Naive thymus-derived CD4-positive, alpha-beta T cell (primary cell): ENCODE measurements at regions of chr1 and their contacts with region 1.

Region 1: GRCh38 chr1:45583264-45583665 is 576 bp upstream of the NASP start:
- DNase-seq: peak; percentile 77 to 97 (median 95)
- ATAC-seq: peak; percentile 86
- H3K4me3 ChIP-seq: peak overlapping the region; percentile 98
- H3K4me3 Mint-ChIP-seq: peak overlapping the region; percentile 89 to 100 (median 99)
- H3K27ac ChIP-seq: peak overlapping the region; percentile 91
- H3K27ac Mint-ChIP-seq: peak overlapping the region; percentile 91 to 99 (median 98)
- H3K4me1 ChIP-seq: peaks cover 16 to 18% of the 10 kb centered on the region in 2 donors
- H3K4me1 Mint-ChIP-seq: peaks cover 20 to 37% (median 26%) of the 10 kb centered on the region in 7 donors
- H3K27me3 ChIP-seq: no peaks in the 10 kb centered on the region
- H3K27me3 Mint-ChIP-seq: no peaks in the 10 kb centered on the region

Region 2: GRCh38 chr1:44631647-44632539 is 951.4 kb before region 1 on chr1:
- CTCF ChIA-PET with region 1: no interaction called
- POLR2A ChIA-PET with region 1: no interaction called
- intact Hi-C with region 1: loop called in 1 of 2 experiments (anchors 5 kb)
- DNase-seq: peak; percentile 80 to 92 (median 87)
- ATAC-seq: peak; percentile 87
- H3K4me3 ChIP-seq: peak overlapping the region; percentile 70
- H3K4me3 Mint-ChIP-seq: peak overlapping the region; percentile 69 to 95 (median 90)
- H3K27ac ChIP-seq: peak overlapping the region; percentile 85
- H3K27ac Mint-ChIP-seq: peak overlapping the region; percentile 46 to 99 (median 97)
- H3K4me1 ChIP-seq: peaks cover 8 to 13% of the 10 kb centered on the region in 2 donors
- H3K4me1 Mint-ChIP-seq: peaks cover 26 to 50% (median 39%) of the 10 kb centered on the region in 7 donors
- H3K27me3 ChIP-seq: no peaks in the 10 kb centered on the region
- H3K27me3 Mint-ChIP-seq: no peaks in the 10 kb centered on the region

Region 3: DNA sequence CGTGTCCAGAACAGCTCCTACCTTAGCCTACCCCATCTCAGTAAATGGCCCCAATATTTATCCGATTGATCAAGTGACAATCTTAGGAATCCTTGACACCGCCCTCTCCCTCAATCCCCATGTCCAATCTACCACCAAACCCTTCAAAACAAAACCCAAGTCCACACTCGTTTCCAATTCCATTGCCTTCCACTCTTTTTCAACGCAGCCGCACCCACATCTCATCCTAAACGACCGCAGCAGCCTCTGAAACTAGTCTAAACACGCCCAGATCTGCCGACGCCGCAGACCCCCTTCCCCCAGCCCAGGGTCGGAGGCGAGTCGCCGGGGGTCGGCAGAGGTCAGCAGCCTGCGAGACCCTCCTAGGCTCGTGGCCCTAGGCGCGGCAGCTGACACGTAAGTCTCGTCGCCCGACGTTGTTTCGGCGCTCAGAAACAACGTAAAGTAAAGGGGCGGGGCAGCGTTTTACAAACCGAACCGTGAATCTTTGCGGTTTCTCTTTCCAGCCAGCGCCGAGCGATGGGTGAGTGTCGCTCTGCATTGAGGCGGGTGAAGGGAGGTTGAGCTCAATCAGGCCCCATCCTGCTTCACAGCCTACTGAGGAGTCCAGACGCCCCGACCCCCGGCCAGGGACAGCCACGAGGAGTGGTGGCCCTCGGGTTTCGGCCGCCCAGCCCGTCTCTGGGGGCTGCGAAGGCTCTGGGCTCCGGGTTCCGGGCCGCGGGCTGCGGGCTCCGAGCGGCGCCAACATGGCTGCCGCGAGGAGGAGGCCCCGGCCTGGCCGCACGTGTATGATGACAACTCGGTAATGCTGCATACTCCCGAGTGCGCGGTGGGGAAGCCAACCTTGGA is 808.0 kb before region 1 on chr1 and contains the start of gene RPS8:
- CTCF ChIA-PET with region 1: no interaction called
- POLR2A ChIA-PET with region 1: no interaction called
- intact Hi-C with region 1: loop called in 1 of 2 experiments (anchors 1 kb)
- DNase-seq: peak; percentile 77 to 92 (median 90)
- ATAC-seq: peak; percentile 91
- H3K4me3 ChIP-seq: peak within 1 kb of the TSS; percentile 99
- H3K4me3 Mint-ChIP-seq: peak within 1 kb of the TSS; percentile 88 to 99 (median 92)
- H3K27ac ChIP-seq: peak within 1 kb of the TSS; percentile 89
- H3K27ac Mint-ChIP-seq: peak within 1 kb of the TSS; percentile 91 to 98 (median 94)
- H3K4me1 ChIP-seq: peaks cover 6 to 19% of the 10 kb centered on the region in 2 donors
- H3K4me1 Mint-ChIP-seq: peaks cover 20 to 45% (median 38%) of the 10 kb centered on the region in 7 donors
- H3K27me3 ChIP-seq: no peaks in the 10 kb centered on the region
- H3K27me3 Mint-ChIP-seq: no peaks in the 10 kb centered on the region
- total RNA-seq, gene RPS8: 2,000 to 3,409 (median 3,025) TPM

Region 4: DNA sequence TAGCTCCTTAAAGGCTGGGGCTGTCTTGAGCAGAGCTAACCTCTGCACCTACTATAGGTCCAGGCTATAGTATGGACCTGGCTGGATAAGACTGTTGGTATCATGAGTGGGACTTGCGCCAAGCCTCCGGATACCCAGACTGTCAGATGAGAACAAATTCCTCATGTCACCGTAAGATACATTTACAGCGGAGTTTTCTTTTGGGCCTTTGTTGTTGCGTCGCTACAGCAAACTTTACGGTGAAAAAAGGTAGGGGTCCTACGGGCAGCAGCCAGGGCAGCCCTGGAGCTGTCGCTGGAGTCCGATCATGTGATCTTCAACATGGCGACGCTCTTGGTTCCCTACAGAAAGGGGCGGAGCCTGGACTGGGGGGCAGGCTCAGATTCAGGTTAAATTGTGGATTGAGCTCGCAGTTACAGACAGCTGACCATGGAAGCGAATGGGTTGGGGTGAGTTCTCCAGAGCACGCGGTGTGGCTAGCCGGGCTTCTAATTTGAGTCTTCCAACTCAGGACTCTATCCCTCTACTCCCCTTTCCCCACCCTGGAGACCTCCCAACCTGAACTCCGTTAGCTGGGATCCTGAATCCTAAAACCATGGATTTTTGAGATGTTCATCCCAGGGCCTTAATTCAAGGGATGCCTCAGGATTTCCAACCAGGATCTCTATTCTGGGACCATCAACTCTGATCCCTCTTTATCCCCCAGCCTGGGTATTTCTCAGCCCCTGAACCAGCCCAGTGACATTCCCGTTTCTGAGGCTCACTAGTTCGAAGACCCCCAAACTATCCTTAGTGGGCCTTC is 571.2 kb before region 1 on chr1 and contains the start of gene UROD:
- CTCF ChIA-PET with region 1: no interaction called
- POLR2A ChIA-PET with region 1: interaction called, 6 read pairs
- intact Hi-C with region 1: loop called (anchors 1 kb)
- DNase-seq: peak; percentile 61 to 94 (median 89)
- ATAC-seq: peak; percentile 93
- H3K4me3 ChIP-seq: peak within 1 kb of the TSS; percentile 65
- H3K4me3 Mint-ChIP-seq: peak within 1 kb of the TSS; percentile 90 to 100 (median 93)
- H3K27ac ChIP-seq: peak within 1 kb of the TSS; percentile 81
- H3K27ac Mint-ChIP-seq: peak within 1 kb of the TSS; percentile 89 to 98 (median 94)
- H3K4me1 ChIP-seq: peaks cover 28 to 30% of the 10 kb centered on the region in 2 donors
- H3K4me1 Mint-ChIP-seq: peaks cover 29 to 64% (median 57%) of the 10 kb centered on the region in 7 donors
- H3K27me3 ChIP-seq: no peaks in the 10 kb centered on the region
- H3K27me3 Mint-ChIP-seq: no peaks in the 10 kb centered on the region
- total RNA-seq, gene UROD: 40.7 to 72.8 (median 58.1) TPM

Region 5: GRCh38 chr1:45499415-45499769 is 83.9 kb before region 1 on chr1:
- CTCF ChIA-PET with region 1: no interaction called
- POLR2A ChIA-PET with region 1: interaction called, 11 read pairs
- intact Hi-C with region 1: loop called (anchors 1 kb)
- DNase-seq: peak in 1 of 9 donors; percentile 17
- ATAC-seq: no peak
- H3K4me3 ChIP-seq: peak overlapping the region; percentile 68
- H3K4me3 Mint-ChIP-seq: peak overlapping the region; percentile 91 to 99 (median 94)
- H3K27ac ChIP-seq: peak overlapping the region; percentile 70
- H3K27ac Mint-ChIP-seq: peak overlapping the region; percentile 87 to 97 (median 92)
- H3K4me1 ChIP-seq: peaks cover 5 to 17% of the 10 kb centered on the region in 2 donors
- H3K4me1 Mint-ChIP-seq: peaks cover 24 to 38% (median 33%) of the 10 kb centered on the region in 7 donors
- H3K27me3 ChIP-seq: no peaks in the 10 kb centered on the region
- H3K27me3 Mint-ChIP-seq: no peaks in the 10 kb centered on the region

Region 6: GRCh38 chr1:45629035-45629434 is 45.8 kb after region 1 on chr1:
- CTCF ChIA-PET with region 1: no interaction called
- POLR2A ChIA-PET with region 1: no interaction called
- intact Hi-C with region 1: no loop called
- DNase-seq: no peak
- ATAC-seq: no peak
- H3K4me3 ChIP-seq: no peak overlapping the region
- H3K4me3 Mint-ChIP-seq: no peak overlapping the region
- H3K27ac ChIP-seq: no peak overlapping the region
- H3K27ac Mint-ChIP-seq: peak overlapping the region in 1 of 9 donors; percentile 55
- H3K4me1 ChIP-seq: no peaks in the 10 kb centered on the region
- H3K4me1 Mint-ChIP-seq: no peaks in the 10 kb centered on the region
- H3K27me3 ChIP-seq: no peaks in the 10 kb centered on the region
- H3K27me3 Mint-ChIP-seq: no peaks in the 10 kb centered on the region

Region 7: GRCh38 chr1:45750298-45751038 is 167.2 kb after region 1 on chr1 and contains the start of gene IPP:
- CTCF ChIA-PET with region 1: no interaction called
- POLR2A ChIA-PET with region 1: no interaction called
- intact Hi-C with region 1: loop called (anchors 1 kb)
- DNase-seq: peak; percentile 81 to 96 (median 88)
- ATAC-seq: peak; percentile 94
- H3K4me3 ChIP-seq: peak within 1 kb of the TSS; percentile 81
- H3K4me3 Mint-ChIP-seq: peak within 1 kb of the TSS; percentile 90 to 98 (median 96)
- H3K27ac ChIP-seq: peak within 1 kb of the TSS; percentile 97
- H3K27ac Mint-ChIP-seq: peak within 1 kb of the TSS; percentile 95 to 100 (median 99)
- H3K4me1 ChIP-seq: peaks cover 0 to 12% of the 10 kb centered on the region in 2 donors
- H3K4me1 Mint-ChIP-seq: peaks cover 7 to 50% (median 37%) of the 10 kb centered on the region in 7 donors
- H3K27me3 ChIP-seq: no peaks in the 10 kb centered on the region
- H3K27me3 Mint-ChIP-seq: peaks cover 0 to 2% (median 0%) of the 10 kb centered on the region in 5 donors
- total RNA-seq, gene IPP: 9.1 to 19.8 (median 12.5) TPM

Region 8: DNA sequence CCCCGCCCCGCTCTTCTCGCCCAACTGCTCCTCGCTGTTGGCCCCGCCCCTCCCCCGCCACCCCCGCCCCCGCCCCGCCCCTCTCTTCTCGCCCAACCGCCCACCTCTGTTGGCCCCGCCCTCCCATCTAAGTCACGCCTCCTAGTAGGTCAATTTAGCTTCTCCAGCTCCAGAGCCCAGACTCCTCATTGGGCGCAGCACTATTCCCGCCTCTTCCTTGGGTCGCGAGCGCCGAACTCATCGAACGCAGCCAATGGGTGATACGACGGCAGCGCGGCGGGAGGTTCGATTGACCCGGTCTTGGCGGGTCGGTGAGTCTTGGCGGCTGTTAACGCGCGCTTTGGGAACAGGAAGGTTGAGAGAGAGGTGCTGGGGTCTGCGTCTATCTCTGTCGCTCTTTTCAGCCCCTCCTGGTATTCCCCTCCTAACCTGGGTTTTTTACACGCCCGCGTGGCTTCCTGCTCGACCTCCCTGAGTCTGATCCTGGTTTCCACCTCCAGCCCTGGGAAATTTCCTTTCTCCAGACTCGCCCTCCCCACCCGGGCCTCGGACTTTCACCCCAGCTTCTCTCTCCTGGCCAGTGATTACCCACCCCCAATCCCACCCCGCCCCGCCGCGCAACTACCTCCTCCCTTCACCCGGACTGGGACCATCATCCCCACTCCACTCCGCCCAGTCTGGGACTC is 664.3 kb after region 1 on chr1 and contains the start of gene RAD54L:
- CTCF ChIA-PET with region 1: no interaction called
- POLR2A ChIA-PET with region 1: no interaction called
- intact Hi-C with region 1: loop called (anchors 1 kb)
- DNase-seq: peak; percentile 83 to 97 (median 95)
- ATAC-seq: peak; percentile 99
- H3K4me3 ChIP-seq: peak within 1 kb of the TSS; percentile 89
- H3K4me3 Mint-ChIP-seq: peak within 1 kb of the TSS; percentile 86 to 100 (median 94)
- H3K27ac ChIP-seq: peak within 1 kb of the TSS; percentile 66
- H3K27ac Mint-ChIP-seq: peak within 1 kb of the TSS; percentile 62 to 96 (median 78)
- H3K4me1 ChIP-seq: peaks cover 4 to 8% of the 10 kb centered on the region in 2 donors
- H3K4me1 Mint-ChIP-seq: peaks cover 0 to 41% (median 17%) of the 10 kb centered on the region in 7 donors
- H3K27me3 ChIP-seq: no peaks in the 10 kb centered on the region
- H3K27me3 Mint-ChIP-seq: no peaks in the 10 kb centered on the region
- total RNA-seq, gene RAD54L: 0.94 to 31.9 (median 2.1) TPM